ENCODE measurements at regions of chr1 and their contacts with region 1.

Region 1: DNA sequence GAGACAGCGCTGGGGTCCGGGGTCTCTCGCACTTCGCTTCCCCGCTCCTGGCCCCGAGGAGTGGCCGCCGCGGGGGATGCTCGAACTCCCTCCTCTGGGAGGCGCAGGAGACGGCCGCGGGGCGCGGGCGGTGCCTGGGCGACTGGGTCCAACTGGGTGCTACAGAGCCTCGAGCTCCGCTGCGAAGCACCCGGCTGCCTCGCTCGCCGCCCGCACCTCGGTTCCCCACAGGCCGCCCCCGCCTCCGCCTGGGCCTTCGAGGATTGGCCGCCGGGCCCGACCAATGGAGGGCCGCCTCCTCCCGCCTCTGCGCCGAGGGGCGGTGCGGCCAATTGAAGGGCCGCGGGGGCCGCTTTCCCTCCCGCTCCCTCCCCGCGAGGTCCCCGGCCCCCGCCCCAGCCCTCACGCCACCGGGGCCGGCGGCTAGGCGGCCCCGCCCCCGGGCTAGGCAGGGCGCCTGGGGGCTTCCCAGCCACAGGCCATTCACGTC is at the start of gene CNN3:
- DNase-seq: peak; percentile 62
- ATAC-seq: peak; percentile 85
- H3K4me3 ChIP-seq: peak within 1 kb of the TSS; percentile 69 to 86
- H3K27ac ChIP-seq: peak within 1 kb of the TSS; percentile 89
- H3K4me1 ChIP-seq: peaks cover 11 to 34% of the 10 kb centered on the region in 2 experiments; a peak in 3 of 4 replicates
- H3K27me3 ChIP-seq: no peaks in the 10 kb centered on the region
- CTCF ChIP-seq: no peak
- POLR2A ChIP-seq: peak; percentile 31
- RAD21 ChIP-seq: peak; percentile 20; the same call in 1 of the 2 replicates
- total RNA-seq, gene CNN3: 109 TPM

Region 2: DNA sequence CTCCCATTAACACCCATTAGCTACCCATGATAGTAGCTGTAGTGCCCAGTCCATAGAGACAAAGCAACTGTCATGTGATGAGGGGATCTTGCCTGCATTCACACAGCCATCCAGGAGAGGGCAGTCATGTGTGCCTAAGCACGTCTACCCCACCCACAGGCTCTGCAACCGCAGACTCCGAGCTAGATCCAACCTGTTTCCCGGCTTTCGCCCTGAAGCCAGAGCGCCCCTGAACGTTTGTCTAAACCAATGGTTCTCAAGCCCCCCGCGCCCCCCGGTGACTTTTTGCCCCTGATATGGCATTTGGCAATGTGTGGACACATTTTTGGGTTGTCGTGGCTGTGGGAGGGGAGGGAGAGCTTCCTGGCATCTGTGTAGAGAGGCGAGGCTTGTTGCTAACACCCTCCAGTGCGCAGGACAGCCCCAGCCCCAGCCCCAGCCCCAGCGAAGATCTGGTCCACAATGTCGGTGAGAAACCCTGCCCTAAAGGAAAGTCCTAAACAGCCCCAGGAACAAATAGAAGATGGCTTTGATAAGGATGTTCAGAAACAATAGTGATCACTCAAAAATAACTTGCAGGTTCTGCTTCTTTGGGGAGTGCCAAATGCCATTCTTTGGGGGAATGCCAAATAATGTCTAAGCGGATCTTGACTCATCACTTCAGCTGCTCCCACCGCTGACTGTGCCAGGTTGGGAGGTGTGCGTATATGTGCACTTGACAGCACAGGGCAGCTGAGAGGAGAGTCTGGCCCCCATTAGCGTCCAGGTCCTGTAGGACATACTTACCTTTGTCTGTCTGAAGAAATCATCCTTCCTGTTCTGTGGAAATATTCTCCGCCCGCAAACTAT is 72.3 kb before region 1 on chr1:
- CTCF ChIA-PET with region 1: interaction called, 11 read pairs
- POLR2A ChIA-PET with region 1: interaction called, 3 read pairs
- RAD21 ChIA-PET with region 1: interaction called in 1 of 2 experiments, 4 read pairs
- intact Hi-C with region 1: loop called (anchors 2 kb)
- DNase-seq: peak; percentile 86
- ATAC-seq: peak; percentile 92
- H3K4me3 ChIP-seq: peak overlapping the region; percentile 42 to 57
- H3K27ac ChIP-seq: peak overlapping the region; percentile 28; the same call in 1 of the 2 replicates
- H3K4me1 ChIP-seq: peaks cover 16 to 31% of the 10 kb centered on the region in 2 experiments
- H3K27me3 ChIP-seq: no peaks in the 10 kb centered on the region
- CTCF ChIP-seq: peak; percentile 91 to 94 (median 93)
- POLR2A ChIP-seq: no peak
- RAD21 ChIP-seq: peak; percentile 96